ENCODE measurements at regions of chr22 and their contacts with region 1.

Region 1: GRCh38 chr22:44202261-44202789 is 21.6 kb downstream of the PARVG start:
- DNase-seq: no peak
- ATAC-seq: no peak
- H3K4me3 ChIP-seq: no peak overlapping the region
- H3K27ac ChIP-seq: no peak overlapping the region
- H3K4me1 ChIP-seq: no peaks in the 10 kb centered on the region
- H3K27me3 ChIP-seq: peaks cover 0 to 16% (median 3%) of the 10 kb centered on the region in 3 donors
- CTCF ChIP-seq: no peak

Region 2: GRCh38 chr22:44151676-44152075 is 50.6 kb before region 1 on chr22:
- intact Hi-C with region 1: loop called in 1 of 2 experiments (anchors 5 kb)
- DNase-seq: no peak
- ATAC-seq: peak in 1 of 4 donors; percentile 47
- H3K4me3 ChIP-seq: no peak overlapping the region
- H3K27ac ChIP-seq: no peak overlapping the region
- H3K4me1 ChIP-seq: no peaks in the 10 kb centered on the region
- H3K27me3 ChIP-seq: no peaks in the 10 kb centered on the region
- CTCF ChIP-seq: no peak

Region 3: GRCh38 chr22:45268958-45269844 is 1066.9 kb after region 1 on chr22:
- intact Hi-C with region 1: no loop called
- DNase-seq: peak; percentile 85 to 95
- ATAC-seq: peak; percentile 79 to 87 (median 83)
- H3K4me3 ChIP-seq: peak overlapping the region; percentile 74
- H3K27ac ChIP-seq: peak overlapping the region; percentile 68
- H3K4me1 ChIP-seq: peaks cover 31% of the 10 kb centered on the region
- H3K27me3 ChIP-seq: no peaks in the 10 kb centered on the region
- CTCF ChIP-seq: peak; percentile 96

Measured in psoas muscle (tissue), 8 donors.